Activated CD4-positive, alpha-beta T cell treated with anti-CD3 and anti-CD28 coated beads for 36 hours (primary cell): ENCODE measurements at regions of chr2 and their contacts with region 1.

Region 1: GRCh38 chr2:165401285-165401852 is 68.1 kb upstream of the CSRNP3 start:
- DNase-seq: no peak
- ATAC-seq: no peak
- H3K4me3 Mint-ChIP-seq: no peak overlapping the region
- H3K27ac Mint-ChIP-seq: no peak overlapping the region
- H3K4me1 Mint-ChIP-seq: peaks cover 6% of the 10 kb centered on the region
- H3K27me3 Mint-ChIP-seq: peaks cover 6% of the 10 kb centered on the region

Region 2: GRCh38 chr2:165239230-165239629 is 162.1 kb before region 1 on chr2 and contains the start of gene SCN2A:
- CTCF ChIA-PET with region 1: no interaction called
- POLR2A ChIA-PET with region 1: no interaction called
- intact Hi-C with region 1: loop called in 1 of 2 experiments (anchors 5 kb)
- DNase-seq: no peak
- ATAC-seq: no peak
- H3K4me3 Mint-ChIP-seq: no peak within 1 kb of the TSS
- H3K27ac Mint-ChIP-seq: no peak within 1 kb of the TSS
- H3K4me1 Mint-ChIP-seq: no peaks in the 10 kb centered on the region
- H3K27me3 Mint-ChIP-seq: no peaks in the 10 kb centered on the region
- total RNA-seq, gene SCN2A: 0.07 to 0.14 TPM

Region 3: DNA sequence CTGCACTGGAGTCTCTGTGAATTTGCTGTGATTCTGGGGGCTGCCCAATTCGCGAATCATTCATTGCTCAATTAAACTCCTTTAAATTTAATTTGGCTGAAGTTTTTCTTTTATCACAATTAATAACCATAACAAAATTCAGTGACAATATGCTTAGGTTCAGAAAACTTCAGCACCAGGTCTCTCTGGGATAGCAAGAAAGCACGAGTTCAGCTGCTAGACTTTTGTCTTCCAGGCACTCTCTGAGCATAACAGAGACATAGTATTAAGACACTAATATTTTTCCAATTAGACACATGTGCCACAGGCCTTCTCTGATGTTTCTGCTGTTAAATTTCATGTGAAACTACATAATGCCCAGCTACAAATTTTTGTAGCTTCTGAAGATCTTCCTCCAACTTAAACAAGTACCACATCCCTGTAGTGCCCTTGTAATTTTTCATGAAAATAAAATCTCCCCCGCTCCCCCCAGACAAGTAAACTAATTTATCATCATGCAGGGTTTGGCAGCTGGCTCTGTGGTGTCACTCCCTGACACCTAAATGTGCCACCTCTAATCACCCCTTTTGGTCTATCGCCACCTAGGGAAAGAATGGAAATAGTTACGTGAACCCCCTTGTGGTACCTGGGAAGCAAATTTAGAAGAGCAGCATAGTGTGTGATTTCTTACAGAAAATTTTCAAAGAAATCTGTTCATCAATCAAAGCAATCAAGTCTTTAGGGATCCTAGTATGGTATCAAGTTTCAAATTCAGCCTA is 162.3 kb after region 1 on chr2:
- CTCF ChIA-PET with region 1: interaction called, 5 read pairs
- POLR2A ChIA-PET with region 1: no interaction called
- intact Hi-C with region 1: loop called (anchors 5 to 10 kb)
- DNase-seq: no peak
- ATAC-seq: no peak
- H3K4me3 Mint-ChIP-seq: no peak overlapping the region
- H3K27ac Mint-ChIP-seq: no peak overlapping the region
- H3K4me1 Mint-ChIP-seq: no peaks in the 10 kb centered on the region
- H3K27me3 Mint-ChIP-seq: peaks cover 2% of the 10 kb centered on the region

Region 4: GRCh38 chr2:165698444-165698894 is 297.1 kb after region 1 on chr2:
- CTCF ChIA-PET with region 1: no interaction called
- POLR2A ChIA-PET with region 1: no interaction called
- intact Hi-C with region 1: loop called (anchors 2 to 5 kb)
- DNase-seq: peak; percentile 10
- ATAC-seq: peak; percentile 57
- H3K4me3 Mint-ChIP-seq: no peak overlapping the region
- H3K27ac Mint-ChIP-seq: no peak overlapping the region
- H3K4me1 Mint-ChIP-seq: no peaks in the 10 kb centered on the region
- H3K27me3 Mint-ChIP-seq: peaks cover 2% of the 10 kb centered on the region

Region 5: DNA sequence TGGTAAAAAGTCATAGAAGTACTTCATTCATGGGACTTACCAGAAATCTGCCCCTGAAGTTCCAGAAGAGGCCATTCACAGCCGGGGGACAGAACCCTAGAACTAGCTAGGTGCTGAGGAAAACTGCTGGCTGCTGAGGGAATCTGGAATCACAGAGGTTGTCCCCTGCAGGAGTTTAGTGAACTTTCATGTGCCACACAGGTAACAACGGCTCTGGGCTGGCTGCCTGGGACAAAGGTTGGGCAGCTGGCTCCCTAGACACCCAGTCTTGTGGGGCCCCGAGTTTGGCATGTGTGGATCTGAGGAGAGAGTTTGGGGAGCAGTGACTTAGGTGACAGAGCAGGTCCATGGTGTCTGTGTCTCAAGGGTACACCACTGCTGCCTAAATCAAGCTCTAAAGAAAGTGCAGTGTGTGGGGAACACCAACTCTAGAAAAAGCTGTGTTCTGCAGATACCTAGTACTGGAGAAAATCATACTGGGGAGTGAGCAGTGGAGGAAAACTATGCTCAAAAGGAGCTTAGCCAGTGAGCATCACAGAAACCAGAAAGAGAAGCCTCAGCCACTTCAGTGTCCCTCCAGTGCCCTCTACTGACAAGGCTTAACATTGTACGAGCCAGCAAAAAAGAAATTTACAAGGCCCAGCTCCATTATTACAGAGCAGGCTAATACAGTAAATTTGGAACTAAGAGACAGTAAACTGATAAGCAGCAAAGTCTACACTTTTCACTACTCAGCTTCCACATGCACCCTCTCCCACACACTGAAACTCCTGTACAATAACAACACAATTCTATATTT is 377.5 kb after region 1 on chr2:
- CTCF ChIA-PET with region 1: no interaction called
- POLR2A ChIA-PET with region 1: no interaction called
- intact Hi-C with region 1: loop called (anchors 5 kb)
- DNase-seq: no peak
- ATAC-seq: peak; percentile 42
- H3K4me3 Mint-ChIP-seq: no peak overlapping the region
- H3K27ac Mint-ChIP-seq: no peak overlapping the region
- H3K4me1 Mint-ChIP-seq: no peaks in the 10 kb centered on the region
- H3K27me3 Mint-ChIP-seq: no peaks in the 10 kb centered on the region

Region 6: GRCh38 chr2:165874445-165875039 is 473.2 kb after region 1 on chr2:
- CTCF ChIA-PET with region 1: interaction called, 12 read pairs
- POLR2A ChIA-PET with region 1: no interaction called
- intact Hi-C with region 1: loop called (anchors 1 kb)
- DNase-seq: no peak
- ATAC-seq: peak; percentile 52
- H3K4me3 Mint-ChIP-seq: no peak overlapping the region
- H3K27ac Mint-ChIP-seq: no peak overlapping the region
- H3K4me1 Mint-ChIP-seq: peaks cover 36% of the 10 kb centered on the region
- H3K27me3 Mint-ChIP-seq: no peaks in the 10 kb centered on the region

Region 7: GRCh38 chr2:166127217-166128155 is 726.1 kb after region 1 on chr2 and contains the start of gene SCN1A:
- CTCF ChIA-PET with region 1: interaction called, 4 read pairs
- POLR2A ChIA-PET with region 1: no interaction called
- intact Hi-C with region 1: loop called in 1 of 2 experiments (anchors 2 kb)
- DNase-seq: no peak
- ATAC-seq: no peak
- H3K4me3 Mint-ChIP-seq: no peak within 1 kb of the TSS
- H3K27ac Mint-ChIP-seq: no peak within 1 kb of the TSS
- H3K4me1 Mint-ChIP-seq: peaks cover 2% of the 10 kb centered on the region
- H3K27me3 Mint-ChIP-seq: peaks cover 18% of the 10 kb centered on the region
- total RNA-seq, gene SCN1A: not detected